ENCODE measurements at regions of chr14 and their contacts with region 1.

Region 1: DNA sequence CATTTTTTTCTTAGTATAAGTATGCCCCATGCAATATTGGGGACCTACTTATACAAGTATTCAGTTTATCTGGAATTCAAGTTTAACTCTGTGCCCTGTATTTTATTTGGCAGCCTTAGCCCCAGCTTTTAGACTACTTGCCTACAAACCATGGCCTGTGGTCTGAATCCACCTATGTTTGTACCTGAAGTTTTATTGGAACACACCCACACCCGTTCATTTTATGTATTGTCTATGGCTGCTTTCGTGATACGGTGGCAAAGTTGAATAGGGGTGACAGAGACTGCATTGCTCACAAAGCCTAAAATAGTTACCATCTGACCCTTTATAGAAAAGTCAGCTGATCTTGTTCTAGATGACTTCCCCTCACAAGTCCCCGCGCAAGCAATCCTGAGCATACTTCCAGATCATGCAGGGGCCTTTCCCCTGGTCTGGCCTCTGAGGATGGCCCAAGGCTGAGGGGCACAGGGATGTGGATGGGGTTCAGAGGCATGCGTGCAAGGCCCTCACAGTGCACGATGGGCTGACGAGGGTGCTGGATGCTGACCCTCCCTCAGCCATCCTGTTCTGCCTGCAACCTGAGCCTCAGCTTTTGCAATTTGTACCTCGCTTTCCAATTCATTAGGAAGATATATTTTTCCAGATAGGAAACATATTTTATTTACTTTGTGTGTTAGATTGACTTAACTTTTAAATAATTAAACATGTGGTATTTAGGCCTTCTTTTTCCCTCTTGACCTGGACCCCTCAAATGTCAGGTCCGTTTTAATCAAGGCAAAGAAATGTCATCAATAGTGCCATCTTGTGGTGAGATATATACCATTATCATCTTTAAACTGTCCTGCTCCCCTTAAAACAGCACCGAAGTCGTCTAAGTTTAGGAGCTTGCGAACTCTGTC is 527.3 kb upstream of the CCDC196 start:
- DNase-seq: peak in 6 of 9 donors; percentile 15 to 52 (median 42)
- ATAC-seq: peak; percentile 66
- H3K4me3 ChIP-seq: no peak overlapping the region
- H3K4me3 Mint-ChIP-seq: peak overlapping the region in 1 of 10 donors; percentile 50
- H3K27ac ChIP-seq: no peak overlapping the region
- H3K27ac Mint-ChIP-seq: peak overlapping the region in 6 of 9 donors; percentile 3 to 80 (median 39)
- H3K4me1 ChIP-seq: peaks cover 12 to 14% of the 10 kb centered on the region in 2 donors
- H3K4me1 Mint-ChIP-seq: peaks cover 0 to 47% (median 20%) of the 10 kb centered on the region in 7 donors
- H3K27me3 ChIP-seq: no peaks in the 10 kb centered on the region
- H3K27me3 Mint-ChIP-seq: peaks cover 0 to 17% (median 0%) of the 10 kb centered on the region in 5 donors

Region 2: GRCh38 chr14:65222440-65222858 is 736.5 kb before region 1 on chr14:
- CTCF ChIA-PET with region 1: interaction called, 4 read pairs
- POLR2A ChIA-PET with region 1: no interaction called
- intact Hi-C with region 1: loop called in 1 of 2 experiments (anchors 1 kb)
- DNase-seq: peak in 8 of 9 donors; percentile 19 to 57 (median 44)
- ATAC-seq: peak; percentile 84
- H3K4me3 ChIP-seq: no peak overlapping the region
- H3K4me3 Mint-ChIP-seq: peak overlapping the region in 5 of 10 donors; percentile 11 to 56 (median 25)
- H3K27ac ChIP-seq: no peak overlapping the region
- H3K27ac Mint-ChIP-seq: peak overlapping the region in 3 of 9 donors; percentile 43 to 83 (median 67)
- H3K4me1 ChIP-seq: peaks cover 4 to 18% of the 10 kb centered on the region in 2 donors
- H3K4me1 Mint-ChIP-seq: peaks cover 11 to 55% (median 44%) of the 10 kb centered on the region in 7 donors
- H3K27me3 ChIP-seq: no peaks in the 10 kb centered on the region
- H3K27me3 Mint-ChIP-seq: no peaks in the 10 kb centered on the region

Region 3: GRCh38 chr14:65810322-65810721 is 148.6 kb before region 1 on chr14:
- CTCF ChIA-PET with region 1: interaction called, 10 read pairs
- POLR2A ChIA-PET with region 1: no interaction called
- intact Hi-C with region 1: loop called in 1 of 2 experiments (anchors 1 kb)
- DNase-seq: no peak
- ATAC-seq: no peak
- H3K4me3 ChIP-seq: no peak overlapping the region
- H3K4me3 Mint-ChIP-seq: no peak overlapping the region
- H3K27ac ChIP-seq: no peak overlapping the region
- H3K27ac Mint-ChIP-seq: no peak overlapping the region
- H3K4me1 ChIP-seq: no peaks in the 10 kb centered on the region
- H3K4me1 Mint-ChIP-seq: peaks cover 0 to 7% (median 5%) of the 10 kb centered on the region in 7 donors
- H3K27me3 ChIP-seq: no peaks in the 10 kb centered on the region
- H3K27me3 Mint-ChIP-seq: peaks cover 0 to 17% (median 0%) of the 10 kb centered on the region in 5 donors

Region 4: GRCh38 chr14:65840118-65840751 is 118.7 kb before region 1 on chr14:
- CTCF ChIA-PET with region 1: interaction called, 40 read pairs
- POLR2A ChIA-PET with region 1: interaction called, 4 read pairs
- intact Hi-C with region 1: no loop called
- DNase-seq: no peak
- ATAC-seq: no peak
- H3K4me3 ChIP-seq: no peak overlapping the region
- H3K4me3 Mint-ChIP-seq: peak overlapping the region in 5 of 10 donors; percentile 14 to 61 (median 38)
- H3K27ac ChIP-seq: no peak overlapping the region
- H3K27ac Mint-ChIP-seq: peak overlapping the region in 2 of 9 donors; percentile 31 to 35
- H3K4me1 ChIP-seq: peaks cover 22 to 59% of the 10 kb centered on the region in 2 donors
- H3K4me1 Mint-ChIP-seq: peaks cover 44 to 98% (median 85%) of the 10 kb centered on the region in 7 donors
- H3K27me3 ChIP-seq: no peaks in the 10 kb centered on the region
- H3K27me3 Mint-ChIP-seq: no peaks in the 10 kb centered on the region

Region 5: DNA sequence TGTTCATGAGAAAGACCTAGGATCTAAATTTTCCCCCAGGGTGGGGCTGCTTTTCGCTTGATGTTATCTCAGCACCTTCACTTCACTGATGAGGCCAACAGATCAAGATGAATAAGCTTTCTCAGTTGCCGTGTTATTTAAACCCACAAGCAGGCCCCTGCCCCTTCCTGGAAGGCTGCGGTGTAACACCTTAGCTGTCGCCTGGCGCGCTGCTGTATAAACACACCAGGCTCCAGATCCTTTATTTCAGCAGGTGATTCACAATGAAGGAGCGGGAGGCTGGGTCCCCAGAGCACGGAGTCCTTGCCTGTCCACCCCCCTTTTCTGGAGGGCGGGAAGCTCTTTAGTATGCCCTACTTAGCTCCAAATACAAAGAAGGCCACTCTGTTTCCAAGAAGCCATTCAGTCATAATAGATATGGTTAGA is 31.0 kb before region 1 on chr14:
- CTCF ChIA-PET with region 1: interaction called, 47 read pairs
- POLR2A ChIA-PET with region 1: interaction called, 3 read pairs
- intact Hi-C with region 1: loop called (anchors 1 kb)
- DNase-seq: peak; percentile 31 to 77 (median 70)
- ATAC-seq: peak; percentile 92
- H3K4me3 ChIP-seq: peak overlapping the region; percentile 5
- H3K4me3 Mint-ChIP-seq: peak overlapping the region; percentile 68 to 80 (median 73)
- H3K27ac ChIP-seq: peak overlapping the region; percentile 52
- H3K27ac Mint-ChIP-seq: peak overlapping the region; percentile 84 to 98 (median 92)
- H3K4me1 ChIP-seq: peaks cover 47 to 51% of the 10 kb centered on the region in 2 donors
- H3K4me1 Mint-ChIP-seq: peaks cover 45 to 72% (median 61%) of the 10 kb centered on the region in 7 donors
- H3K27me3 ChIP-seq: no peaks in the 10 kb centered on the region
- H3K27me3 Mint-ChIP-seq: no peaks in the 10 kb centered on the region

Region 6: DNA sequence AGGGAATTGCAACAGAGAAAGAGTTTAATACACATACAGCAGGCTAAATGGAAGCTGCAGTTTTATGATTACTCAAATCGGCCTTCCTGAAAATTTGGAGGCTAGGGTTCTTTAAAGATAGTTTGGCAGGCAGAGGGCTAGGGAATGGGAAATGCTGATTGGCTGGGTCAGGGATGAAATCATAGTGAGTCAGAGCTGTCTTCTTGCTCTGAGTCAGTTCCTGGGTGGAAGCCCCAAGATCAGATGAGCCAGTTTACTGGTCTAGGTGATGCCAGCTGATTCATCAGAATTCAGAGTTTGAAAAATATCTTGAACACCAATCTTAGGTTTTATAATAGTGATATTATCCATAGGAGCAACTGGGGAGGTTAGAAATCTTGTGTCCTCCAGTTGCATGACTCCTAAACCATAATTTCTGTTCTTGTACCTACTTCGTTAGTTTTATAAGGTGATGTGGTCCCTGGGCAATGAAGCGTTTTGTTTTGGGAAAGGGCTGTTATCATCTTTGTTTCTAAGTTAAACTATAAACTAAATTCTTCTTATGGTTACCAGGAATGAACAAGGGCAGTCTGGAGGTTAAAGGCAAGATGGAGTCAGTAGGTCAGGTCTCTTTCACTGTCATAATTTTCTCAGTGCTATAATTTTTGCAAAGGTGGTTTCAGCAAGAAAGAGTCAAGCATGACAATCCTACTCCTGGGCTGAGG is 269.5 kb after region 1 on chr14:
- CTCF ChIA-PET with region 1: no interaction called
- POLR2A ChIA-PET with region 1: no interaction called
- intact Hi-C with region 1: no loop called
- DNase-seq: no peak
- ATAC-seq: no peak
- H3K4me3 ChIP-seq: no peak overlapping the region
- H3K4me3 Mint-ChIP-seq: no peak overlapping the region
- H3K27ac ChIP-seq: no peak overlapping the region
- H3K27ac Mint-ChIP-seq: no peak overlapping the region
- H3K4me1 ChIP-seq: no peaks in the 10 kb centered on the region
- H3K4me1 Mint-ChIP-seq: peaks cover 0 to 6% (median 0%) of the 10 kb centered on the region in 7 donors
- H3K27me3 ChIP-seq: no peaks in the 10 kb centered on the region
- H3K27me3 Mint-ChIP-seq: peaks cover 11 to 37% (median 16%) of the 10 kb centered on the region in 5 donors